Heart right ventricle (tissue), 16 donors: ENCODE measurements at regions of chr16 and their contacts with region 1.

Region 1: GRCh38 chr16:47079860-47080259 is 63.9 kb downstream of the NETO2 start:
- DNase-seq: no peak
- ATAC-seq: no peak
- H3K4me3 ChIP-seq: no peak overlapping the region
- H3K27ac ChIP-seq: no peak overlapping the region
- H3K4me1 ChIP-seq: no peaks in the 10 kb centered on the region
- H3K27me3 ChIP-seq: no peaks in the 10 kb centered on the region
- CTCF ChIP-seq: no peak

Region 2: GRCh38 chr16:46830902-46831647 is 248.8 kb before region 1 on chr16 and contains the start of gene C16orf87:
- intact Hi-C with region 1: loop called in 1 of 10 experiments (anchors 10 kb)
- DNase-seq: peak; percentile 92 to 94
- ATAC-seq: peak; percentile 97 to 99 (median 98)
- H3K4me3 ChIP-seq: peak within 1 kb of the TSS; percentile 69 to 96 (median 92)
- H3K27ac ChIP-seq: peak within 1 kb of the TSS; percentile 76 to 97 (median 90)
- H3K4me1 ChIP-seq: peaks cover 0 to 19% (median 12%) of the 10 kb centered on the region in 9 donors
- H3K27me3 ChIP-seq: no peaks in the 10 kb centered on the region
- CTCF ChIP-seq: no peak
- total RNA-seq, gene C16orf87: 8.6 to 17.8 (median 12.3) TPM

Region 3: GRCh38 chr16:47180073-47180472 is 100.2 kb after region 1 on chr16:
- intact Hi-C with region 1: no loop called
- DNase-seq: no peak
- ATAC-seq: no peak
- H3K4me3 ChIP-seq: no peak overlapping the region
- H3K27ac ChIP-seq: no peak overlapping the region
- H3K4me1 ChIP-seq: no peaks in the 10 kb centered on the region
- H3K27me3 ChIP-seq: no peaks in the 10 kb centered on the region
- CTCF ChIP-seq: no peak